ENCODE measurements at regions of chr1 and their contacts with region 1.

Region 1: DNA sequence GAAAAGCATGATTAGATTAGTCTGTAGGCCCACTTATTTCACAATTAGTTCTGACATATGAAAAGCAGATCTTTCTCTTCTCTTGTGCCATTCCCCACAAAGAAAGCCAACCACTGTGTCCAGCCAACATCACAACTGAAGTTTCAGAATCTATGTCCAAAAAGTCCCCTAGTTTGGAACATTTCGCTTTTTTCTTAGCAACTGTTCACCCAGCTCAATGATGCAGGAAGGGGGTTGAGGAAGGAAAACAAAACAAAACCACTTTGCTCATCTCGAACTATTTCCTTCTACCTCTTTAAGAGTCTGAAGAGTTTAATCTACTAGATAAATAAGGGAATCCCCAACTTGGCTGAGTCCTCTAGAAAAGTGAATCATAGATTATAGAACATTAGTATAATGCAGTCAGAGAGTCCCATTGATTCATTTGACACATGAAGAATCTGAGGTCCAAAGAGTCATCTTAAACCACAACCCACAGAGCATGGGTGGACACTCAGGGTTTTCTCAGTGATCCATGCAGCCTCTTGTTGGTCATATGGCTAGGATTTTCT is 159.3 kb upstream of the SGIP1 start:
- DNase-seq: no peak
- H3K4me3 ChIP-seq: no peak overlapping the region
- H3K27ac ChIP-seq: no peak overlapping the region
- H3K4me1 ChIP-seq: no peaks in the 10 kb centered on the region
- H3K27me3 ChIP-seq: no peaks in the 10 kb centered on the region
- CTCF ChIP-seq: no peak
- EP300 ChIP-seq: no peak
- POLR2A ChIP-seq: no peak
- RAD21 ChIP-seq: no peak

Region 2: DNA sequence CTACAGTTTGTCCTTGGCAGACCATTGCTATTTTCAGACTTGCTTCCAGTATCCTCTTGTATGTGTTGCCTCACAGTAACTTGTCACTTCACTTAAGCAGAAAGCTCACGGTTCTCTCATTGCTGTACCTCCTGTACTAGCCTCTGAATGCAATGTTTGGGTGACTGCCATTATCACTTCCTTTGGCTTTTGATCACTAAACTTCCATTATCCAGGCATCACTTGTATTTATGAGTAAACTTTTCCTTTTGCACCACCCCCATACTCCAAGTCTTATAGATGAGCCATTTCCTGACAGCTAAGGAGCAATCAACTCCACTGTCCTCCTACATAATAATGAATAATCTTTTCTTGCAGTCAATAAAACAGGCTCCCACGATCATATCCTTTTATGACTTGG is 326.6 kb before region 1 on chr1:
- CTCF ChIA-PET with region 1: no interaction called
- POLR2A ChIA-PET with region 1: no interaction called
- DNase-seq: no peak
- H3K4me3 ChIP-seq: no peak overlapping the region
- H3K27ac ChIP-seq: no peak overlapping the region
- H3K4me1 ChIP-seq: no peaks in the 10 kb centered on the region
- H3K27me3 ChIP-seq: no peaks in the 10 kb centered on the region
- CTCF ChIP-seq: no peak
- EP300 ChIP-seq: no peak
- POLR2A ChIP-seq: no peak
- RAD21 ChIP-seq: no peak

Region 3: GRCh38 chr1:66316464-66317247 is 58.0 kb before region 1 on chr1:
- CTCF ChIA-PET with region 1: no interaction called
- POLR2A ChIA-PET with region 1: no interaction called
- DNase-seq: no peak
- H3K4me3 ChIP-seq: no peak overlapping the region
- H3K27ac ChIP-seq: no peak overlapping the region
- H3K4me1 ChIP-seq: no peaks in the 10 kb centered on the region
- H3K27me3 ChIP-seq: peaks cover 0 to 1% (median 0%) of the 10 kb centered on the region in 4 experiments; a peak in 1 of 7 replicates
- CTCF ChIP-seq: no peak
- EP300 ChIP-seq: no peak
- POLR2A ChIP-seq: no peak
- RAD21 ChIP-seq: no peak

Region 4: GRCh38 chr1:66360285-66360724 is 14.3 kb before region 1 on chr1:
- CTCF ChIA-PET with region 1: interaction called, 10 read pairs
- POLR2A ChIA-PET with region 1: interaction called, 5 read pairs
- DNase-seq: no peak
- H3K4me3 ChIP-seq: no peak overlapping the region
- H3K27ac ChIP-seq: no peak overlapping the region
- H3K4me1 ChIP-seq: peaks cover 0 to 7% (median 4%) of the 10 kb centered on the region in 4 experiments; a peak in 3 of 7 replicates
- H3K27me3 ChIP-seq: no peaks in the 10 kb centered on the region
- CTCF ChIP-seq: peak in 1 of 3 experiments; percentile 25; a peak in 2 of 4 replicates
- EP300 ChIP-seq: no peak
- POLR2A ChIP-seq: no peak
- RAD21 ChIP-seq: peak in 1 of 2 experiments; percentile 13; a peak in 1 of 4 replicates

Region 5: GRCh38 chr1:66402194-66402593 is 27.6 kb after region 1 on chr1:
- CTCF ChIA-PET with region 1: no interaction called
- POLR2A ChIA-PET with region 1: no interaction called
- DNase-seq: no peak
- H3K4me3 ChIP-seq: no peak overlapping the region
- H3K27ac ChIP-seq: no peak overlapping the region
- H3K4me1 ChIP-seq: no peaks in the 10 kb centered on the region
- H3K27me3 ChIP-seq: peaks cover 0 to 2% (median 0%) of the 10 kb centered on the region in 4 experiments; a peak in 1 of 7 replicates
- CTCF ChIP-seq: no peak
- EP300 ChIP-seq: no peak
- POLR2A ChIP-seq: no peak
- RAD21 ChIP-seq: no peak